Cardiac septum (tissue), 1 donor: ENCODE measurements at regions of chr12 and their contacts with region 1.

Region 1: DNA sequence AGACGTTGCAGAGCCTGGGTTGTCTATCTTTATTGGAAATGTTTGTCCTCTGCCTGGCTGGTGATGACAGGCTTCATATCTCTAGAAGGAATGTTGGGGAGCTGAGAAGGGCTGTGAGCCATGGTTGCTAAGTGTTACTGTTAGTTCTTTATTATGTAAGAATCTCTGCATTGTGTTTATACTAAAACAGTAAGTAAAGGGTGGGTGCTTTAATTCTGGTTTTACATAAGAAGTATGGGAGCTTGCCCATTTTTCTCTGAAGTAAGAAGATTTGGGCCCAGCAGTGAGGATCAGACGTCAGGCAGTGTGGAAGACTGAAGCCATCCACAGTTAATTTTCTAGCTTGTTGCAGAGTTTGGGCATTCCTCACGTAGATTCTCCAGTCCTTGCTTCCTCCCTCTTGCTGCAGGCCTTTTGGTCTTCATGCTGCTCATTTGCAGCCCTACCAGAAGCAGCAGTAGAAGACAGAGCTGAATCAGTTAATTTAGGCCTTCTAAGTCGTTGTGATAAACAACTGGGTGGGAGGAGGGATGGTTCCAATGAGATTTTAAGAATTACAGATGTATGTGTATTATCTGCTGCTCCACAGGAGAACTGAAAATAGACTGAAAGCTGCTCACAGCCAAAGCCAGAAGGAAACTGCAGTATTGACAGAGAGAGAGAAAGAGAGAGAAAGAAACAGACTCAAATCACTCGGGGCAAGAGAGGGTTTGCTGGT is 21.4 kb downstream of the WNT5B start:
- DNase-seq: no peak

Region 2: GRCh38 chr12:1553987-1554982 is 96.1 kb before region 1 on chr12:
- intact Hi-C with region 1: no loop called
- DNase-seq: no peak

Region 3: DNA sequence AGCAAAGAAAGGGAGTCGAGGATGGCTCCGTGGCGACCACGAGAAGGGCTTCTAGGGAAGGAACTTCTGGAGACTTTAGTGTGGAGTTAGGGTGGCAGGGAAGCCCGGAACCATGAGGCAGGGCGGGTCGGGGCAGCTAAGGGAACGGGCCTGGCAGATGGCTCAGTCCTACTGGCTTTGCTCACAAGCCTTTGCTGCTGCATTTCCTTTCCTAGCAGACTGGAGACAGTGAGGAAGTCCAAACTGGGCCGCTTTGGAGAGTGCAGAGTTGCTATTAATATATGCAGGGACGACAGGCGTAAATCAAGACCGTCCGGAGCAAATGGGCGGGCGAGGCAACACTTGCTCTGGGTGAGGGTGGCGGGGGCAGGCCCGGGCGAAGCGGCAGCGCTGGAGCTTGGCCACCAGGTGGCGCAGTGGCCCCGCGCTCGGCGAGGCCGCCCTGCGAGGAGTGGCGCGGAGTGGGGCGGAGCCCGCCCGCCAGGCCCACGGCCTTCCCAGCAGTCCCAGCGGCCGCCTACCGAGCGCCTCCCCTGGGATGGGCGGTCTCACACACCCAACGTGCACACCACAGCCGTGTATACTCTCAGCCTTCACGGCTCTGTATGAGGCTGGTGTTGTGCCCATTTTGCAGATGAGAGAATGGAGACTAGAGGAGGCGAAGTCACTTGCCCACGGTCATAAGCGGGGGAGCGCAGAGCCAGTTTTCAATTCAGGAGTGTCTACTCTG is 145.5 kb after region 1 on chr12:
- intact Hi-C with region 1: loop called (anchors 1 kb)
- DNase-seq: peak; percentile 97